ENCODE measurements at regions of chr12 and their contacts with region 1.

Region 1: DNA sequence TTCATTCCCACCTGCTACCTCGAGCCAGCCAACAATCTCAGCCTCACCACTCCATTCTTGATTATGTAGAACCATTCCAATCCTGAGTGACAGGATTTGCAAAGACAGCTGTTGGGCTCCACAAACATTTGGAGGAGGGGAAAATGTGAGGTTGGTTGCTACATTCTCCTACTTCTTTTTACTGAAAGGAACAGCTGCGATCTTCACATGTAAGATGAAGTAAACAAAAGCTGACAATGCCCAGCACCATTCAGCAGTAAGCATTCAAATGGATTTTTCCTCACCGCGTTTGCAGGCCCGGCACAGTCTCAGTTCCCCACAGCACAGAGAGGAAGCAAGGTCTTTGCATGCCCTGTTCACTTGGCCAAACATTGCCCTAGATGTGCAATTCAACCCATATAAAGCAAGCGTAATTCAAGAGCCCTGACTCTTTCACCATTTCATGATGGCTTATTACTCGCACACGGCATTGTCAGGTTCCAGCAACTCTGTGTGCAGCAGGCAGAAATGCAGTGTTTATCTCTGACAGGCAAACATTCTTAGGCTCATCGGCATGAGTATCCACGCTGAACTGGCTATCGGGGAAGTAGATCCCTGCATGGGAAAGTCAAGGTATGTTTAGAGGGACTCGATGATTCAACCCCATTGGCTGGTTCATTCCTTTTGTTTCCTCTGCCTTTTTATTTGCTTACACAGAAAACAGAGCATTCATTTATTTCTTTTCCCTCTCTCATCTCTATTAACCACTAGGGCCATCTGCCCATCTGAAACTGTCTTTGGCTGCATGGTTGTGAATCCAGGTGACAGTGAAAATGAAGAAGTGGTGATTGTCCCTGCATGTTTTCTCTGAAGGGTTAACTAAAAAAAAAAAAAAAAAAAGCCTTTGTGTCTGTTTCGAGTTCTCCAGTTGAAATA is 236.1 kb upstream of the PLEKHG7 start:
- DNase-seq: peak; percentile 90
- ATAC-seq: peak; percentile 39
- H3K4me3 ChIP-seq: peak overlapping the region; percentile 82
- H3K27ac ChIP-seq: peak overlapping the region; percentile 99
- H3K4me1 ChIP-seq: peaks cover 62% of the 10 kb centered on the region
- H3K27me3 ChIP-seq: no peaks in the 10 kb centered on the region
- CTCF ChIP-seq: no peak
- EP300 ChIP-seq: peak; percentile 65 to 70; a peak in 3 of 4 replicates
- POLR2A ChIP-seq: peak; percentile 85
- RAD21 ChIP-seq: peak; percentile 5

Region 2: DNA sequence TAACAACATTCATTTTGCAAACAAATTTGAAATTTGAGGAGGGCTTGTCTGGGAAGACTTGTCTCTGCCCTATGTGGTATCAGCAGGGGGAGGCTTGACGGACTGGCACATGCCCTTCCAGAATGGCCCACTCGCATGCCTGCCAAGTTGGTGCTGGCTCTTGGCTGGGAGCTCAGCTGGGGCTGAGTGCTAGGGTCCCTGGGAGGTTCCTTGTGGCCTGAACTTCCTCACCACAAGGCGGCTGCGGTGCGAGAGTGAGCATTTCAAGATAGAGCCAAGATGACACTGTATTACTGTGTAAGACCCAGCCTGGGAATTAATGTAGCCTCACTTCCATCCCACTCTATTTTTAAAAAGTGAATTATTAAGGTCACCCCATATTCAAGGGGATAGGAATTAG is 35.5 kb before region 1 on chr12:
- CTCF ChIA-PET with region 1: no interaction called
- POLR2A ChIA-PET with region 1: interaction called, 7 read pairs
- RAD21 ChIA-PET with region 1: interaction called, 24 read pairs
- SMC1A ChIA-PET with region 1: interaction called, 19 read pairs
- in situ Hi-C with region 1: no loop called
- intact Hi-C with region 1: loop called (anchors 1 kb)
- DNase-seq: no peak
- ATAC-seq: peak; percentile 64
- H3K4me3 ChIP-seq: no peak overlapping the region
- H3K27ac ChIP-seq: peak overlapping the region; percentile 10
- H3K4me1 ChIP-seq: peaks cover 46% of the 10 kb centered on the region
- H3K27me3 ChIP-seq: no peaks in the 10 kb centered on the region
- CTCF ChIP-seq: peak; percentile 6 to 42 (median 40); a peak in 3 of 6 replicates
- EP300 ChIP-seq: no peak
- POLR2A ChIP-seq: no peak
- RAD21 ChIP-seq: peak; percentile 61

Region 3: DNA sequence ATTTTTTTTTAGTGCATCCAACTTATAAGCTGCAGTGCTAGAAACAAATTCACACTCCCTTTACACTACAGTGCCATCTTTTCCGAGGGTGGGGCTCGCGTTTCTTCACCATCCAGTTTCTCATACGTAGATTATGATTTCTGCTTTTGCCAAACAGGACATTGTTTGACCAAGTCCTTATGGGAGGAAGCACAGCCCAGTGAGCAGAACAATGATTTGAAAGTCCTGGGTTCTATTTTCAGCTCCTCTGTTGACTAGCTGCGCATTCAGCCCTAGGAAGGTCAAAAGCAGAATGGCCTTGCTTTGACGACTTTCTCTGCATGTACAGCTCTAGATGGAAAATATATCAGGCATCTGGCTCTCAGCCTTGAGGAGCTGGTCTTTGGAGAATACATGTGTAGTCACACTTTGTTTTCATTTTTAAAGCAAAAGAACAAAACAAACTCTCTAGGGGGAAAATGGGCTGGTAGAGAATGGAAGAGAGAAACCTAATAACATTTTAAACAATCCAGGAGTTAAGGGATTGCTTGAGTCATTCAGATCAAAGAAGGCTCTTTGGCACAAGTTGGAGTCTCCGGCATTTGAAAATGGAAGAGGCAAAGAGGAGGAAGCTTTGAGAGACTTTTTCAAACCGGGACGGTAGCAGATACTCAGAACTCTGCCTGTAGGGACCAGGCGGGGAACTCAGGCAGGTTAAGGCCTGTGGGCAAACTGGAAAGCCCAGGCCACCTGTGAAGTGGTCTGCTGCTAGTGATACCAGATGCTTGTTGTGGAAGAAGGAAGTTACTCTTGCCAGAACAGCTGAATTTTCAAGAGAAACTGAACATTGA is 21.2 kb before region 1 on chr12:
- CTCF ChIA-PET with region 1: interaction called, 11 read pairs
- POLR2A ChIA-PET with region 1: interaction called, 11 read pairs
- RAD21 ChIA-PET with region 1: interaction called, 67 read pairs
- SMC1A ChIA-PET with region 1: interaction called, 88 read pairs
- in situ Hi-C with region 1: no loop called
- intact Hi-C with region 1: loop called (anchors 1 kb)
- DNase-seq: peak; percentile 97
- ATAC-seq: peak; percentile 90
- H3K4me3 ChIP-seq: peak overlapping the region; percentile 41
- H3K27ac ChIP-seq: peak overlapping the region; percentile 100
- H3K4me1 ChIP-seq: peaks cover 44% of the 10 kb centered on the region
- H3K27me3 ChIP-seq: no peaks in the 10 kb centered on the region
- CTCF ChIP-seq: no peak
- EP300 ChIP-seq: peak; percentile 89 to 91
- POLR2A ChIP-seq: peak; percentile 61
- RAD21 ChIP-seq: peak; percentile 32; the same call in 1 of the 2 replicates

Region 4: GRCh38 chr12:92539113-92539749 is 72.6 kb after region 1 on chr12:
- CTCF ChIA-PET with region 1: interaction called, 18 read pairs
- POLR2A ChIA-PET with region 1: interaction called, 3 read pairs
- RAD21 ChIA-PET with region 1: interaction called, 5 read pairs
- SMC1A ChIA-PET with region 1: interaction called, 18 read pairs
- in situ Hi-C with region 1: no loop called
- intact Hi-C with region 1: loop called (anchors 1 kb)
- DNase-seq: peak; percentile 93
- ATAC-seq: peak; percentile 54
- H3K4me3 ChIP-seq: no peak overlapping the region
- H3K27ac ChIP-seq: peak overlapping the region; percentile 99
- H3K4me1 ChIP-seq: peaks cover 72% of the 10 kb centered on the region
- H3K27me3 ChIP-seq: no peaks in the 10 kb centered on the region
- CTCF ChIP-seq: no peak
- EP300 ChIP-seq: peak; percentile 90 to 98
- POLR2A ChIP-seq: no peak
- RAD21 ChIP-seq: 0 out of 2 replicates have a peak, but pooled peaks have one; percentile 36

Region 5: DNA sequence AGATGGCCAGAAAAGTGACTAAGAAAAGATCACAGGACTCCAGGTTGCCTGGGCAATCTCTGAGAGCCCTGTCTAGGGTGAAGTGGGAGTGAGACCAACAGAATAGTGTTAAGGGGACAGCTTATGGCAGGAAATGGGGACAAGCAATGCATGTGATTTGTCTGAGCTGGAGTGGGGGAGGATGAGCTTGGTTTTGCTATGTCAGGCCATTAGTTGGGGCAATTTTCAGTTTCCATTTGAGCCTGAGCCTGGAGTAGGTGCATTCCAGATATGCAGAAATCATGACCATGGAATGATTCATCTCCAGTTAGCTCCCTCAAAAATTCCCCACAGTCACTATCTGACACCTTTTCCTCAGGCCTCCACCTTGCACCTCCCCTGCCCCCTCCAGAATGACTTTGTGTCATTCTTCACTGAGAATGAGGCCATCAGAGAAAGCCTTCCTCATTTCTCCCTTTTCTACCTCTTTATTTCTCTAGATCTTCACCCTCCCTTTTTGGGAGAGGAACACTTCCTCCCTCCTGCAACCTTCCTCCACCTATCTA is 85.3 kb after region 1 on chr12:
- CTCF ChIA-PET with region 1: interaction called, 18 read pairs
- POLR2A ChIA-PET with region 1: interaction called, 10 read pairs
- RAD21 ChIA-PET with region 1: interaction called, 11 read pairs
- SMC1A ChIA-PET with region 1: interaction called, 13 read pairs
- in situ Hi-C with region 1: loop called (anchors 25 kb)
- intact Hi-C with region 1: loop called (anchors 2 kb)
- DNase-seq: peak; percentile 98
- ATAC-seq: peak; percentile 75
- H3K4me3 ChIP-seq: peak overlapping the region; percentile 17; the same call in 1 of the 2 replicates
- H3K27ac ChIP-seq: peak overlapping the region; percentile 98
- H3K4me1 ChIP-seq: peaks cover 67% of the 10 kb centered on the region
- H3K27me3 ChIP-seq: no peaks in the 10 kb centered on the region
- CTCF ChIP-seq: no peak
- EP300 ChIP-seq: peak; percentile 92 to 97
- POLR2A ChIP-seq: peak; percentile 57
- RAD21 ChIP-seq: no peak

Measured in GM12878 (cell line).